ENCODE measurements at regions of chr22 and their contacts with region 1.

Region 1: DNA sequence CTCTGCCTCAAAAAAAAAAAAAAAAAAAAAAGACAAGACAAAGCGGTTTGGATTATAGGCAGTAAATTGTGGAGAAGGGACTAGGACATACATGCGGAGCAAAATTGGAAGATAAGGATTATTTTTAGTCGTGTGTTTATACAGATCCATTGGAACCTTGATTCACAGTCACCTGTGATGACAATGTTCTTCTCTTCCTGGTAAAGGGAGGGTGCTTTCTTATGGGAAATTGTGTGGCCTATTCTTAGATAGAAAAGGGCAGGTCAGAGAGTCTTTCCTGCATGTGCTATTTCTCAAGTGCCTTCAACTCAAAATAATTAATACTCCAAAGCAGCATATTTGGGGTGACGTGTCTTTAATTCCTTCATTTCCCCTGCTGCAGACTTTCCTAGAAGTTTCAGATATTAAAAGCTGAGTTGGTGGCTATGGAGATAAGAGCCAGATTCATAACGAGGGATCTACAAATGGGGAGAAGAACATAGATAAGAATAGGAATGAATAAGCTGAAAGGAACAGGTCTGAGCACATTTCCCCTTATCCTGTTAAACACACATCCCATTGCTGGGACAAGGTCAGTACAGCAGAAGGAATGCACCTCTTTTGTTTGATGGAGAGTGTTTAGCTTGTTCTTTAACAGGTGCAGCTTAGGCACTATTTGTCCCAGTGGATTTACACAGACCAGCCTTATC is 22.5 kb downstream of the GSTT2B start:
- DNase-seq: peak in 1 of 2 donors; percentile 81
- H3K4me3 ChIP-seq: no peak overlapping the region
- H3K27ac ChIP-seq: peak overlapping the region in 4 of 5 donors; percentile 30 to 52 (median 50)
- H3K4me1 ChIP-seq: peaks cover 0 to 15% (median 4%) of the 10 kb centered on the region in 4 donors
- H3K27me3 ChIP-seq: no peaks in the 10 kb centered on the region
- CTCF ChIP-seq: no peak
- EP300 ChIP-seq: no peak
- POLR2A ChIP-seq: no peak

Region 2: GRCh38 chr22:24005201-24005600 is 66.7 kb after region 1 on chr22 and contains the start of gene GSTT4:
- intact Hi-C with region 1: loop called (anchors 5 kb)
- DNase-seq: peak; percentile 18 to 32
- H3K4me3 ChIP-seq: no peak within 1 kb of the TSS
- H3K27ac ChIP-seq: peak within 1 kb of the TSS in 2 of 5 donors; percentile 27 to 36
- H3K4me1 ChIP-seq: peaks cover 11 to 30% (median 15%) of the 10 kb centered on the region in 4 donors
- H3K27me3 ChIP-seq: no peaks in the 10 kb centered on the region
- CTCF ChIP-seq: no peak
- EP300 ChIP-seq: no peak
- POLR2A ChIP-seq: no peak
- total RNA-seq, gene GSTT4: not detected